AG04450 (cell line): ENCODE measurements at regions of chr2 and their contacts with region 1.

Region 1: GRCh38 chr2:192162392-192163042 is 32.2 kb downstream of the TMEFF2 start:
- DNase-seq: peak; percentile 58
- H3K4me3 ChIP-seq: no peak overlapping the region
- H3K27ac ChIP-seq: no peak overlapping the region
- H3K27me3 ChIP-seq: no peaks in the 10 kb centered on the region
- CTCF ChIP-seq: peak; percentile 93

Region 2: GRCh38 chr2:191758518-191759507 is 403.7 kb before region 1 on chr2:
- CTCF ChIA-PET with region 1: interaction called, 17 read pairs
- POLR2A ChIA-PET with region 1: no interaction called
- DNase-seq: no peak
- H3K4me3 ChIP-seq: no peak overlapping the region
- H3K27ac ChIP-seq: no peak overlapping the region
- H3K27me3 ChIP-seq: peaks cover 5% of the 10 kb centered on the region
- CTCF ChIP-seq: peak; percentile 70

Region 3: DNA sequence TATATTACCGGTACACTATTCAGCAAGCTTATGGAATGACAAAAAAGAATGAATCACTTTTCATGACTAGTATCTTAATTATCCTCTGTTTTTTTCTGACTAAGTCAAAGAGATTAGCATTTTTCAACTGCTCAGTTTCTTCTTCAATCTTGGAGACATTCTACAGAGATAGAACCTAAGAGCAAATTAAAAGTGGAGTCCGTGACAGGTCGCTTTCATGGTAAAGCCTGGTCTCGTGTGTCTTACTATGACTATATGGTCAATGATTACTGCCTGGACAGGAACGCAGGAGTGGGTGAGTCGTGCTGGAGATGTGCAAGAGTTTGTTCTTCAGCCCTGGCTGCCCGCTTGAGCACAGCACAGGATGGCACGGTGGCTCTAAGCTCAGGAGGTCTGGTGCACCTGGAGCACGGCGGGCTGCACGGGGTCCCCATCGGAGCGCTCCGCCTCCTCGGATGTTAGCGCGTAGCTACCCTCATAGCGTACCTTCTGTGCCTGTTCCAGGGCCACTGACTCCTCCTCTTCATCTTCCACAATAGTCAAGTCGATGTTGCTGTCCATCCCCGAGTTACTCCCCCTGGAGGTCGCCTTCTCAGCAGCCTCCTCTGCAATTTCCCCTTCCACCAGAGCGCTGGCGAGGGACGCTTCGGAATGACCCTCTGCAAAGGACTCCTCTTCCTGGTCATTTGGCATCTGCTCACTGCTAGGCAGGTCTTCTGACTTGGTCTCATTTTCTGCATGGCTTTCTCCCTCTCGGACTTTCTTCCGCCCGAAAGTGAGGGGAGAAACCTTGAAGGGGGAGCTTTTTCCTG is 326.8 kb before region 1 on chr2:
- CTCF ChIA-PET with region 1: interaction called, 20 read pairs
- POLR2A ChIA-PET with region 1: no interaction called
- DNase-seq: no peak
- H3K4me3 ChIP-seq: no peak overlapping the region
- H3K27ac ChIP-seq: no peak overlapping the region
- H3K27me3 ChIP-seq: no peaks in the 10 kb centered on the region
- CTCF ChIP-seq: no peak

Region 4: GRCh38 chr2:191910518-191910917 is 252.0 kb before region 1 on chr2:
- CTCF ChIA-PET with region 1: no interaction called
- POLR2A ChIA-PET with region 1: no interaction called
- DNase-seq: peak; percentile 37
- H3K4me3 ChIP-seq: no peak overlapping the region
- H3K27ac ChIP-seq: no peak overlapping the region
- H3K27me3 ChIP-seq: no peaks in the 10 kb centered on the region
- CTCF ChIP-seq: no peak

Region 5: DNA sequence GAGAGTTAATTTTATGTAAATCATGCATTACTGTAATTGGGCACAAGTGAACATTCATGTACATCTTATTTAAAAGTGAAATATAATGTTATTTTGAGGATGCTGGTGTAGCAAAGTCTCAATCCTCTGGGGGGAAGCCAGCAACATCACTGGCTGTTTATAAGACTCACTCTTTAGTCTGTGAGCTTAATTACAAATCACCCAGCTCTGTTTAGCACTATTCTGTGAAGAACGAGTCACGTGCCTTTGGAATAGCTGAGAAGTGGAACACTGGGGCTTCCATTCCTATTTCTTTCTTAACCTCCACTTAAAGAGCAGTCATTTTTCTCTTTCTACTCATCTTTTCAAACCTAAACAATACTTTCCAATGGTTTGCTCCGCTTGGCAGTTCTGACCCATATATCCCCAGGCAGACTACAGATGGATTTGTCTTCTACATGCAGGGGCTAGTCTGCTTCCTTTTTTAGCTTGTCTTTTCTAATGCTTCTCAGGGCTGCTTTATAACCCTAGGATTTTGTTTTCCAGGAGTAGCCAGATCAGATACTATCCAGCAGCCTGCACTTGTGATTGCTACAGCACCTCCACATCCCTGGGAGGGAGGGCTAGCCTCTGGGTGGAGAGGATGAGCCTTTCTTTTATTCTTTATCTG is 220.3 kb before region 1 on chr2:
- CTCF ChIA-PET with region 1: interaction called, 17 read pairs
- POLR2A ChIA-PET with region 1: no interaction called
- DNase-seq: peak; percentile 47
- H3K4me3 ChIP-seq: no peak overlapping the region
- H3K27ac ChIP-seq: peak overlapping the region; percentile 69
- H3K27me3 ChIP-seq: no peaks in the 10 kb centered on the region
- CTCF ChIP-seq: no peak

Region 6: GRCh38 chr2:192148620-192149321 is 13.7 kb before region 1 on chr2:
- CTCF ChIA-PET with region 1: interaction called, 39 read pairs
- POLR2A ChIA-PET with region 1: no interaction called
- DNase-seq: no peak
- H3K4me3 ChIP-seq: no peak overlapping the region
- H3K27ac ChIP-seq: no peak overlapping the region
- H3K27me3 ChIP-seq: no peaks in the 10 kb centered on the region
- CTCF ChIP-seq: peak; percentile 37

Region 7: DNA sequence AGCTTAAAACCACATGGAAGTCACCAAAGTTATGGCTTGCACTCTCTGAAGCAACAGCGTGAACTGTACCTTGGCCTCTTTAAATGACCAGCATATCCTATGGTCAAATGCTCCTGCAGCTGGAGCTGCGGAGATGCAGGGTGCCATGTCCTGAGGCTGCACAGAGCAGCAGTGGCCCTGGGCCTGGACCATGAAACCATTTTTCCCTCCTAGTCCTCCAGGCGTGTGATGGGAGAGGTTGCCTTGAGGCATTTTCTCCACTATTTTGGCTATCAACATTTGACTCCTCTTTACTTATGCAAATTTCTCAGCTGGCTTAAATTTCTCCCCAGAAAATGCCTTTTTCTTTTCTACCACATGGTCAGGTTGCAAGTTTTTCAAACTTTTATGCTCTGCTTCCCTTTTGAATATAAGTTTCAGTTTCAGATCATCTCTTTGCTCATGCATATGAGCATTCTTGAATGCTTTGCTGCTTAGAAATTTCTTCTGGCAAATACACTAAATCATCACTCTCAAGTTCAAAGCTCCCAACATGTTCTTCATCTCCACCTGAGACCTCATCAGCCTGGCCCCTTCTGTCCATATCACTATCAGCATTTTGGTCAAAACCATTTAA is 115.1 kb after region 1 on chr2:
- CTCF ChIA-PET with region 1: no interaction called
- POLR2A ChIA-PET with region 1: no interaction called
- DNase-seq: no peak
- H3K4me3 ChIP-seq: no peak overlapping the region
- H3K27ac ChIP-seq: no peak overlapping the region
- H3K27me3 ChIP-seq: no peaks in the 10 kb centered on the region
- CTCF ChIP-seq: no peak